ENCODE measurements at regions of chr2 and their contacts with region 1.

Region 1: GRCh38 chr2:72150157-72150865 is 2.6 kb upstream of the CYP26B1 start:
- DNase-seq: peak; percentile 86
- H3K4me3 ChIP-seq: peak overlapping the region in 2 of 4 donors; percentile 43 to 62
- H3K27ac ChIP-seq: no peak overlapping the region
- H3K4me1 ChIP-seq: peaks cover 31 to 46% (median 37%) of the 10 kb centered on the region in 4 donors
- H3K27me3 ChIP-seq: peaks cover 54% of the 10 kb centered on the region
- CTCF ChIP-seq: peak; percentile 79 to 94 (median 89)
- EP300 ChIP-seq: no peak
- POLR2A ChIP-seq: no peak

Region 2: GRCh38 chr2:71530641-71531332 is 619.5 kb before region 1 on chr2:
- in situ Hi-C with region 1: loop called in 2 of 4 experiments (anchors 10 to 25 kb)
- intact Hi-C with region 1: no loop called
- DNase-seq: no peak
- H3K4me3 ChIP-seq: no peak overlapping the region
- H3K27ac ChIP-seq: no peak overlapping the region
- H3K4me1 ChIP-seq: no peaks in the 10 kb centered on the region
- H3K27me3 ChIP-seq: no peaks in the 10 kb centered on the region
- CTCF ChIP-seq: peak; percentile 51 to 67 (median 56)
- EP300 ChIP-seq: no peak
- POLR2A ChIP-seq: no peak

Region 3: GRCh38 chr2:71558300-71559051 is 591.8 kb before region 1 on chr2:
- in situ Hi-C with region 1: loop called in 2 of 4 experiments (anchors 10 to 25 kb)
- intact Hi-C with region 1: no loop called
- DNase-seq: no peak
- H3K4me3 ChIP-seq: no peak overlapping the region
- H3K27ac ChIP-seq: no peak overlapping the region
- H3K4me1 ChIP-seq: no peaks in the 10 kb centered on the region
- H3K27me3 ChIP-seq: no peaks in the 10 kb centered on the region
- CTCF ChIP-seq: no peak
- EP300 ChIP-seq: no peak
- POLR2A ChIP-seq: no peak

Region 4: DNA sequence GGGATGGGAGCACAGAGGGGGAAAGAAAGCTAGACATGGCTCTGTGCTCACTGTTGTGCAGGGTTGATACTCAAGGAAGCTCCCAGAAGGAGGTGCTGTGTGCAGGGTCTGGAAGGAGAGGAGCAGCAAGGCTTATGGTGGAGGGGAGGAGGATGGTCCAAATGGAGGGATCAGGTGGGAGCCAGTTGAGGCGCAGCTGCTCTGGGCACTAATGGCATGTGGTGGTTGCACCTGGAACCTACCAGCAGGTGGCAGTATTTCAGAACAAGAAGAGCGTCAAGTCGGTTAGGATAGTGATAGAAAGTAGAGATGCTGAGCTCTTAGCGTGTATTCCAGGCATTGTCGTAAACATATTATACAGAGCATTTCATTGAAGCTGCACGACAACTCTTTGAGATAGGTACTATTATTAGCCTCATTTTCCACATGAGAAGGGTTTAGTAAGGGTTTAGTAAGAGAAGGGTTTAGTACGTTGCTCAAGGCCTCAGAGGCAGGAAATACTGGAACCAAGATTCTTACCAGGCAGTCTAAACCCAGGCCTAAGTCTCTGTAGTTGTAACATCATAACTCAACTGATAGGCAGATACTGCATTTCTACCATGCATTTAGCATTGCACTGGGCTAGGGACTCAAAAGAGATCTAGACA is 226.3 kb before region 1 on chr2:
- in situ Hi-C with region 1: loop called in 3 of 4 experiments (anchors 10 kb)
- intact Hi-C with region 1: loop called (anchors 1 kb)
- DNase-seq: peak; percentile 73
- H3K4me3 ChIP-seq: no peak overlapping the region
- H3K27ac ChIP-seq: no peak overlapping the region
- H3K4me1 ChIP-seq: peaks cover 10 to 15% (median 14%) of the 10 kb centered on the region in 4 donors
- H3K27me3 ChIP-seq: no peaks in the 10 kb centered on the region
- CTCF ChIP-seq: peak; percentile 74 to 88 (median 84)
- EP300 ChIP-seq: no peak
- POLR2A ChIP-seq: no peak

Region 5: DNA sequence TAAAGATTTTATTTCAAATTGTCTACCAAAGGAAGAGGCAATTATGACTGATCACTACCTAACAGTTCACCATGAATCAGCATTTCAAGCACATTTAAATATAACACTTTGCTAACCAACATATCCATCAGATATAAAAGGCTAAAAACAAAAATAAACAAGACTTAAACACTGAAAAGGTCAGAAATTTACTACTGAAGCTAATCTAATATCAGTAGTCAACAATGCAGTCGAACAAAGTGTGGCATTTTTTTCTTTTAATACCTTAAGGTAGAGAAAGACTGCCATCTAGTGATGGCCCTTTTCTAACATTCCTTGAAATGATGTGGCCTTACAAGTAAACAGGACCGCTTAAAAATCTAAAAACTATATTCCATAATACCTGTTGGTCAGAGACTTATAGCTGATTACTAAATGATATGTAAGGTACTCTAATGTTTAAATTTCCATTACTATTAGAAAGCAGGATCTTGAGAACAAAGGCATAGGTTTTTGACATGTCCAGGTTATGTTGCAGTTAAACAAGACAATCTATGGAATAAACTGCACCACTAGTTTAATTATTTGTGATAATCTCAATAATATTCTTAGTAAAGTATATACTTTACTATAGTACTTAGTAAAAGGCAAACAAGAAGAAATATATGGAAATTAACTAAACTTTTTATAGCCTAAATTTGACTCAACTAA is 595.5 kb after region 1 on chr2:
- in situ Hi-C with region 1: loop called in 2 of 4 experiments (anchors 10 to 25 kb)
- intact Hi-C with region 1: no loop called
- DNase-seq: no peak
- H3K4me3 ChIP-seq: no peak overlapping the region
- H3K27ac ChIP-seq: no peak overlapping the region
- H3K4me1 ChIP-seq: no peaks in the 10 kb centered on the region
- H3K27me3 ChIP-seq: no peaks in the 10 kb centered on the region
- CTCF ChIP-seq: peak; percentile 52 to 61 (median 56)
- EP300 ChIP-seq: no peak
- POLR2A ChIP-seq: no peak

Measured in transverse colon (tissue), 4 donors.